ENCODE measurements at regions of chr15 and their contacts with region 1.

Region 1: DNA sequence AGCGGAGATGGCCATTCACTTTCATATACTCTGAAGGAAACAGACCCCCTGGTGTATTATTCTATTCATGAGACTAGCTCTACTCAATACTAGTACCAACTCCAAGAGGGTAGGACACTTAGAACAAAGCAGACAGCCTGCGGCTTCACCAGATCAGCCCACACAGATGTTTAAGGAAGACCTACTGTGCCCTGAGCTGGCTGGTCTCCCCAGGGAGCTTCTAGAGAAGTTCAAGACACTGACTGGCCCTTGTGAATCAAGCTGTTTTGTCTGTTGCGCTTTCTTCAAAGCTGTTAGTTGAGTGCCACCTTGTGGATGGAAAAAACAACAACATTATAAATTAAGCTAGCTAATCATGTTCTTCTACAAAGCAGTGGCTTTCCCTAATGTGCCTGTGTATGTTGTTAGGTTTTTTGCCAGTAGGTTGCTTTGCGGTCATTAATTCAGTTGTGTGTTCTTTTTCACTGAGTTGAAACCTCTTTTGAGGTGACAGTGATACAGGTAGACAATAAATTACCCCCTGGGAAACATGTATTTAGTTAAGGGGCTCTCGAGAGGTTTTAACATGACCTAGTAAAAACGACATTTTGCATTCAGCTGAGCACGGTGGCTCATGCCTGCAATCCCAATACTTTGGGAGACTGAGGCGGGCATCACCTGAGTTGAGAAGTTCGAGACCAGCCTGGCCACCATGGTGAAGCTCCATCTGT is 64.2 kb upstream of the MYZAP start:
- DNase-seq: peak; percentile 51
- H3K4me3 Mint-ChIP-seq: no peak overlapping the region
- H3K27ac Mint-ChIP-seq: no peak overlapping the region
- H3K4me1 Mint-ChIP-seq: no peaks in the 10 kb centered on the region
- H3K27me3 Mint-ChIP-seq: no peaks in the 10 kb centered on the region
- CTCF ChIP-seq: peak; percentile 62

Region 2: DNA sequence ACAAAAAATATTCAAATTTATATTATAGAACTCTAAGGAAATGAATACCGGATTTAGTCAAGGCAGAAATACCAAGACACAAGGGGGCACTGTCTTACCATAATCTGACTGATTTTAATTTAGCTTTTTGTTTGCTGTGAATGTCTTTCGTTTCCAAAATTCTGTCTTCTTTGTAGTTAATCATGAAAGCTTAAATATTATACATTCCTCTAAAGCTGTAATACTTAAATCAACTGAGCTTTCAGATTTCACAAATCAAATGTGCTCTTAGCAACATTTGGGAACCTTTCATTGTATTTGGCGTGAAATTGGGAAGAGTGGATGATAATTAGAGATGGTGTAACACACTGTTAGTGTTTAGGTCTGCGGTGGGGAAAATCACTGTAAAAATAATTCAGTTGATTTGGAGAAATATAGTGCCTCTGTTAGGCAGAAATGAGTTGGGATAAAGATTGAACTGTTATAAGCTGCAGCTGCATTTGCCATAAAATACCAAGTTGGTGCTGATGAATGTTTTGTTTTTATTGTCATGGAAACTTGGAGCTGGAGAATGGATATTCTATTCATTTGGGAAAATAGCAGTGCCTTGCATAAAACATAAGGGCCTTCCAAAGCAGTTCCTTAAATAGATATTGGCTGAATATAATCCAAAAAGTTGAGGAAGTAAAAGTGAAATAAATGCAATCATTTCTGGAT is 380.9 kb before region 1 on chr15:
- CTCF ChIA-PET with region 1: interaction called, 7 read pairs
- intact Hi-C with region 1: loop called (anchors 5 kb)
- DNase-seq: peak; percentile 31
- H3K4me3 Mint-ChIP-seq: no peak overlapping the region
- H3K27ac Mint-ChIP-seq: no peak overlapping the region
- H3K4me1 Mint-ChIP-seq: no peaks in the 10 kb centered on the region
- H3K27me3 Mint-ChIP-seq: no peaks in the 10 kb centered on the region
- CTCF ChIP-seq: peak; percentile 63

Region 3: DNA sequence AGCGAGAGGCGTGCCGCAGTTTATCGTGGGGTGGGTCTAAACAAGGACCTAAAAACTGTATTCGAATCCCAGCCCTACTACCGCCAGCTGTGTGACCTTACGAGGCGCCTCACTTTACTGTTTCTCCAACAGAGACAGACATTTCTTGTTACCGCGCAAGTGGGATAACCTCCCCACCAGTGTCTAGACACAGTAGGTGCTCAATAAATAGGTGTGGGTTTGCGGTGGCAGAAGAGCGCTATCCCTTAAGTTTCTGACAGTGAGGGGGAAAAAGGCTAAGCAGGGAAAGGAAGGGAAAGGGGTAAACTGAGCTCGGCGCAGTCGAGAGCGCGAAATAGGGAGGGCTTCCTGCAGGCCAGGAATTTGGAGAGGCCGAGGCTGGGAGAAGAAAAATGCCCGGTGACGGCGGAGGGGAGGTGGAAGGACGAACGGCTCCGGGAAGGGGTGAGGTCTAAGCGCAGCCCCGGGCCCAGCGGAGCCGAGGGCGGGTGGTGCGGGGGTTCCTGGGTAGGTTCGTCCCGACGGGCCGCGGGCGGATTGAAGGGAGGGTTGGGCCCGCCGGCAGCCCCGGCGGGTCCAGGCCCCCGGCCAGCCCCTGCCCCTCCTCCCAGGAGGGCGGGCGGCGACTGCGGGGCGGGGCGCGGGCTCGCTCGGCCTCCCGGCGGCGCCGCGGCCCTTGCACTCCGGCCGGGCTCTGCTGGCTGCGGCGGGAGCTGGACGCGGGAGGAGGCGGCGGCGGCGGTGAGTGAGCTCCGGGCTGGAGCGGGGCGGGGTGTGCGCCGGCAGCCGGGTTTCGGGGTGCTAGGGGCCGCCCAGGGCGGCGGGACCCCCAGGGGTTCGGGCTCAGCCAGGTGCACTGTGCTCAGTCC is 151.5 kb before region 1 on chr15 and contains the start of gene CGNL1:
- CTCF ChIA-PET with region 1: interaction called, 45 read pairs
- intact Hi-C with region 1: loop called (anchors 1 kb)
- DNase-seq: peak; percentile 61
- H3K4me3 Mint-ChIP-seq: peak within 1 kb of the TSS; percentile 71
- H3K27ac Mint-ChIP-seq: peak within 1 kb of the TSS; percentile 45
- H3K4me1 Mint-ChIP-seq: peaks cover 10% of the 10 kb centered on the region
- H3K27me3 Mint-ChIP-seq: peaks cover 39% of the 10 kb centered on the region
- CTCF ChIP-seq: no peak
- total RNA-seq, gene CGNL1: 1.8 and 3.3 TPM in 2 replicates

Region 4: GRCh38 chr15:57462381-57462780 is 65.2 kb before region 1 on chr15:
- CTCF ChIA-PET with region 1: no interaction called
- intact Hi-C with region 1: no loop called
- DNase-seq: no peak
- H3K4me3 Mint-ChIP-seq: no peak overlapping the region
- H3K27ac Mint-ChIP-seq: no peak overlapping the region
- H3K4me1 Mint-ChIP-seq: no peaks in the 10 kb centered on the region
- H3K27me3 Mint-ChIP-seq: no peaks in the 10 kb centered on the region
- CTCF ChIP-seq: no peak

Region 5: GRCh38 chr15:57505949-57506391 is 21.6 kb before region 1 on chr15:
- CTCF ChIA-PET with region 1: interaction called, 16 read pairs
- intact Hi-C with region 1: loop called (anchors 1 kb)
- DNase-seq: peak; percentile 95
- H3K4me3 Mint-ChIP-seq: peak overlapping the region; percentile 48
- H3K27ac Mint-ChIP-seq: peak overlapping the region; percentile 100
- H3K4me1 Mint-ChIP-seq: peaks cover 65% of the 10 kb centered on the region
- H3K27me3 Mint-ChIP-seq: no peaks in the 10 kb centered on the region
- CTCF ChIP-seq: no peak

Measured in Calu3 (cell line).